ENCODE measurements at regions of chr12 and their contacts with region 1.

Region 1: GRCh38 chr12:91361864-91362263 is 179.2 kb upstream of the DCN start:
- DNase-seq: no peak
- H3K4me3 ChIP-seq: no peak overlapping the region
- H3K27ac ChIP-seq: no peak overlapping the region
- H3K4me1 ChIP-seq: no peaks in the 10 kb centered on the region
- H3K27me3 ChIP-seq: no peaks in the 10 kb centered on the region
- CTCF ChIP-seq: peak; percentile 68 to 79 (median 72)
- POLR2A ChIP-seq: no peak

Region 2: DNA sequence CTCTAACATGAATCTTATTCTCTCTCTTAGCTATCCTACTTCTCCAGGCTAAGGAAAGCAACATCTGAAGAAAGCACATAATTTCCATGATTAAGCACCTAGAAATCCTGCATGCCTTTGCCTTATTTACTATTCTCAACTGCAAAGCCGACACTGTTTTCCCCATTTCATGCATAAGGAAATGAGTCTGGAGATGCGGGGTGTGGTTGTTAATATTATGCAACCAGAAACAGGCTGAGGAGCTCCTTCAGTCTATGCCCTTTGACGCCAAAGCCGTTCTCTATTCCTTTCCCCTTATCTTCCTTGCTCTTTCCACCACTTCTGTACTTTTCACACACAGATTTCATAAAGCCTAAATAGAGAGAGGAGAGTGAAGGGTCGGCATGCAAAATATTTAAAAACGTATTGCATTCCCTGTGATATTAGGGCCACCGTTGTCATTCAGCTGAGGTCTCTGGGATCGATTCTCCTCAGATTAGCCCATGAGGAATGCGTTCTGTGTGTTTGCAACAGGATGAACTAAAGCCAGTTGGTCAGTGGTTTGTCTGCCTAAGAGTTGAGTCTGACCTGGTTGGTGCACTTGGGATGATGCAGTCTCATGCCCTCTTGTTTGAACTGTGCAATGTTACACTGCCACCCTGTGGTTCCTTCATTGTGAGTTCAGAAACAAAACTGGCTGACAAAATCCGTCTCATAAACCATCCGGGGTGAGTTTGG is 1287.8 kb after region 1 on chr12:
- intact Hi-C with region 1: loop called (anchors 5 kb)
- DNase-seq: peak; percentile 20 to 67
- H3K4me3 ChIP-seq: no peak overlapping the region
- H3K27ac ChIP-seq: no peak overlapping the region
- H3K4me1 ChIP-seq: no peaks in the 10 kb centered on the region
- H3K27me3 ChIP-seq: no peaks in the 10 kb centered on the region
- CTCF ChIP-seq: peak; percentile 58 to 84 (median 70)
- POLR2A ChIP-seq: no peak